Colonic mucosa (tissue), 4 donors: ENCODE measurements at regions of chr19 and their contacts with region 1.

Region 1: DNA sequence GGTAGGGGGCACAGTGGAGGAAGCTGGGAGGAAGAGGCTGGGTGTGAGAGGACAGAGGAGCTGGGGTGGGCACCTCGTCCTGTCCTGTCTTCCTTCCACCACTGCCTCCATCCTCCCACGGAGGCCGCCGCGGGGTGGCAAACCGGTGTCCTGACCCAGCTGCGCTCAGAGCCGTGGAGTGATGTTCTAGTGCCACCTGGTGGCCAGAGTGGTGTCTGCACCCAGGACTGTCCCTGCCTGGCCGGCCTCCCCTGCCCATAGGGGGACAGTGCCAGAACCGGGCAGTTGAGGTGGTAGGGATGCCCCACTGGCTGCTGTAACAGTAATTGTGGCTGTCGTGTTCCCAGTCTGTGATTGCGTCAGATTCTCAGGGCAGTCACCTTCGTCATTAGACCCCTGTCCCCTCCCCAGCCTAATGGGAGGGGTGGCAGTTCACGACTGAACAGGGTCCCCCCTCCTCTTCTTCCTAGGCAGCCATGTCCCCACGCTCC is 11.1 kb upstream of the ARRDC2 start:
- DNase-seq: peak; percentile 91
- H3K4me3 ChIP-seq: no peak overlapping the region
- H3K27ac ChIP-seq: no peak overlapping the region
- H3K4me1 ChIP-seq: no peaks in the 10 kb centered on the region
- H3K27me3 ChIP-seq: no peaks in the 10 kb centered on the region
- CTCF ChIP-seq: peak; percentile 97

Region 2: GRCh38 chr19:17865364-17866311 is 131.2 kb before region 1 on chr19:
- intact Hi-C with region 1: loop called (anchors 5 kb)
- DNase-seq: peak; percentile 85
- H3K4me3 ChIP-seq: no peak overlapping the region
- H3K27ac ChIP-seq: peak overlapping the region; percentile 61
- H3K4me1 ChIP-seq: peaks cover 9% of the 10 kb centered on the region
- H3K27me3 ChIP-seq: peaks cover 2% of the 10 kb centered on the region
- CTCF ChIP-seq: no peak

Region 3: DNA sequence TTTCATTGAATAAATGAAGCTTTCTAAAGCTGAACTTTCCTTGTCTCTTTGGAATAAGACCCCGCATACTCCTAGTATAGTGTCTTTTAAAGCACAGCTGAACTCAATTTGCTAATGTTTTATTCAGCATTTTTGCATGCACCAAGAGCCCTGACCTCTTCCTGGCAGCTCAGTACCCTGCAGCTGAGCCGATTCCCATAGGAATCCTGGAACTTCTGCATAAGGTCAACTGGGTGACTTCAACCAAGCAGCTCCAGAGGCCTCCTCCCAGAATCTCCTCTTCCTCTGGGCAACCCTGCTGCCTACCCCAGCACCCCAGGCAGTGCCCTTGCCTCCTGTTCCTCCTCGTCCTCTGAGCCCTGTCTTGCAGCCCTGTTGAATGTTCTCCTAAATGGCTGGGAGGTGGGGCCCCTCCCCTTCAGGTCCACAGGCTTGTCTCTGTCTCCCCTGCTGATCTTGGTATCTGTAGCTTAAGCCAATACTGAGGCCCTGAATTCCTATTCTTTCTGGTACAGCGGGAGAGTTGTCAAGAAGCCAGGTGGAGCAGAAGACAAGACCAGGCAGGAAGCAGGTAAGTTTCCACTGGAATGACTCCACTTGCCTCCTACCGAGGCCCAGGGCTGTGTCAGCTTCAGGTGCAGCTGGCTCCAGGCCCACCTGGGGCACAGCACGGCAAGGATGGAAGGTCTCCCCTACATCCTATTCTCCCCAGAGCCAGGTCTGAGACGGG is 87.7 kb before region 1 on chr19:
- intact Hi-C with region 1: no loop called
- DNase-seq: no peak
- H3K4me3 ChIP-seq: no peak overlapping the region
- H3K27ac ChIP-seq: no peak overlapping the region
- H3K4me1 ChIP-seq: no peaks in the 10 kb centered on the region
- H3K27me3 ChIP-seq: no peaks in the 10 kb centered on the region
- CTCF ChIP-seq: no peak

Region 4: DNA sequence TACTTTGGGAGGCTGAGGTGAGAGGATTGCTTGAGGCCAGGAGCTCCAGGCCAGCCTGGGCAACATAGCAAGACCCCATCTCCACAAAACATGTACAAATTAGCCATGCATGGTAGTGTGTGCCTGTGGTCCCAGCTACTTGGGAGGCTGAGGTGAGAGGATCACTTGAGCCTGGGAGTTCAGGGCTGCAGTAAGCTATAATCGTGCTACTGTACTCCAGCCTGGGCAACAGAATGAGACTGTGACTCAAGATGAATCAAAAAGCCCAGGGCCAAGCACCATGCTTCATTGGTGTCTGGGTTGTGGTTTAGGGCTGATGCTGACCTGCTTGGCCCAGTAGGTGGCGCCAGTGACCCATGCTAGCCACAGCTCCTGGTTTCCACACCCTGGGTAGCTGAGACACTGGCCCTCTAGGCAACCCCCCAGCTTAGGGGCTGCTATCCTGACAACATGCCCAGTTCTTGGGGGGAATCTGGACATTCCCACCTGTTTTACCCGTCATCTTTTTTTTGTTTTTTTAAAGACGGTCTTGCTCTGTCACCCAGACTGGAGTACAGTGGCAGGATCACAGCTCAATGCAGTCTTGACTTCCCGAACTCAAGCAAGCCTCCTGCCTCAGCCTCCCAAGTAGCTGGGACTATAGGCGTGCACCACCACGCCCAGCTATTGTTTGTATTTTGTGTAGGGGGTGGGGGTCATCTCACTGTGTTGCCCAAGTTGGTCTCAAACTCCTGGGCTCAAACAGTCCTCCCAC is 58.6 kb before region 1 on chr19:
- intact Hi-C with region 1: loop called (anchors 2 kb)
- DNase-seq: peak; percentile 80
- H3K4me3 ChIP-seq: no peak overlapping the region
- H3K27ac ChIP-seq: no peak overlapping the region
- H3K4me1 ChIP-seq: peaks cover 9% of the 10 kb centered on the region
- H3K27me3 ChIP-seq: no peaks in the 10 kb centered on the region
- CTCF ChIP-seq: peak; percentile 90

Region 5: GRCh38 chr19:17944301-17944700 is 52.6 kb before region 1 on chr19:
- intact Hi-C with region 1: loop called (anchors 2 kb)
- DNase-seq: no peak
- H3K4me3 ChIP-seq: no peak overlapping the region
- H3K27ac ChIP-seq: no peak overlapping the region
- H3K4me1 ChIP-seq: no peaks in the 10 kb centered on the region
- H3K27me3 ChIP-seq: peaks cover 8% of the 10 kb centered on the region
- CTCF ChIP-seq: no peak